Activated CD4-positive, alpha-beta T cell treated with anti-CD3 and anti-CD28 coated beads for 36 hours (primary cell): ENCODE measurements at regions of chr17 and their contacts with region 1.

Region 1: GRCh38 chr17:49788478-49789242 is at the start of gene KAT7:
- DNase-seq: peak; percentile 99
- ATAC-seq: peak; percentile 91
- H3K4me3 Mint-ChIP-seq: peak within 1 kb of the TSS; percentile 89
- H3K27ac Mint-ChIP-seq: peak within 1 kb of the TSS; percentile 98
- H3K4me1 Mint-ChIP-seq: peaks cover 53% of the 10 kb centered on the region
- H3K27me3 Mint-ChIP-seq: no peaks in the 10 kb centered on the region
- total RNA-seq, gene KAT7: 63.5 to 93.0 TPM

Region 2: DNA sequence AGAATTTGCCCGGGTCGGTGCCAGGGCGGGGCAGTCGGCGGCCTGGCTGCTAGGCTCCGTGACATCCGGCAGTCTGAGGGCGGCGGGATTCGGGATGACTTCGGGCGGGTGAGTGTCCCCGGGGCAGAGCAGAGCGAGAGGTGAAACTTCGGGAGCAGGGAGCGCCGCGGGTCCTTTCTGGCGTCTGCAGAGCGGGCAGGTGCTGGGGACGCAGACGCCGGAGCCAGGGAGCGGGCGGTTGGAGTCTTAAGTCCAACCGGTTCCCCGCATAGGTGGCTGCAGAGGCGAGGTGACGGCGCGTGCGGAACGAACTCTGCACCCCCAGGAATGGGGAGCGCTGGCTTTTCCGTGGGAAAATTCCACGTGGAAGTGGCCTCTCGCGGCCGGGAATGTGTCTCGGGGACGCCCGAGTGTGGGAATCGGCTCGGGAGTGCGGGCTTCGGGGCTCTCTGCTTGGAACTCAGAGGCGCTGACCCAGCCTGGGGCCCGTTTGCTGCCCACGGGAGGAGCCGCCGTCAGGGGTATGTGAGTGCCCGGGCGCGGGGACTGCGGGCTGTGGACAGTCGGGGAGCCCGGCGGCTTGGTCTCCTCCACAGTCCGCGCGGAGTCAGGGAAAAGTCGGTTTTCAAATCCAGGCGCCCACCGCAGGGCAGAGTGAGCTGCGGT is 655.8 kb before region 1 on chr17 and contains the start of gene B4GALNT2:
- CTCF ChIA-PET with region 1: no interaction called
- POLR2A ChIA-PET with region 1: no interaction called
- intact Hi-C with region 1: no loop called
- DNase-seq: peak; percentile 43
- ATAC-seq: peak; percentile 39
- H3K4me3 Mint-ChIP-seq: peak within 1 kb of the TSS; percentile 40
- H3K27ac Mint-ChIP-seq: no peak within 1 kb of the TSS
- H3K4me1 Mint-ChIP-seq: peaks cover 7% of the 10 kb centered on the region
- H3K27me3 Mint-ChIP-seq: peaks cover 39% of the 10 kb centered on the region
- total RNA-seq, gene B4GALNT2: 0.02 TPM in 1 of 2 experiments, not detected in the other

Region 3: GRCh38 chr17:49414622-49415350 is 373.9 kb before region 1 on chr17 and contains the start of gene PHB1:
- CTCF ChIA-PET with region 1: no interaction called
- POLR2A ChIA-PET with region 1: no interaction called
- intact Hi-C with region 1: loop called (anchors 1 to 2 kb)
- DNase-seq: peak; percentile 98
- ATAC-seq: peak; percentile 100
- H3K4me3 Mint-ChIP-seq: peak within 1 kb of the TSS; percentile 100
- H3K27ac Mint-ChIP-seq: peak within 1 kb of the TSS; percentile 95
- H3K4me1 Mint-ChIP-seq: peaks cover 32% of the 10 kb centered on the region
- H3K27me3 Mint-ChIP-seq: no peaks in the 10 kb centered on the region
- total RNA-seq, gene PHB1: 346 to 350 TPM

Region 4: GRCh38 chr17:49694847-49695683 is 93.6 kb before region 1 on chr17:
- CTCF ChIA-PET with region 1: interaction called, 8 read pairs
- POLR2A ChIA-PET with region 1: interaction called, 3 read pairs
- intact Hi-C with region 1: loop called (anchors 1 kb)
- DNase-seq: peak; percentile 85
- ATAC-seq: no peak
- H3K4me3 Mint-ChIP-seq: no peak overlapping the region
- H3K27ac Mint-ChIP-seq: peak overlapping the region; percentile 90
- H3K4me1 Mint-ChIP-seq: peaks cover 36% of the 10 kb centered on the region
- H3K27me3 Mint-ChIP-seq: no peaks in the 10 kb centered on the region

Region 5: GRCh38 chr17:49739641-49740271 is 48.9 kb before region 1 on chr17:
- CTCF ChIA-PET with region 1: interaction called, 3 read pairs
- POLR2A ChIA-PET with region 1: interaction called, 8 read pairs
- intact Hi-C with region 1: loop called (anchors 1 kb)
- DNase-seq: peak; percentile 90
- ATAC-seq: peak; percentile 88
- H3K4me3 Mint-ChIP-seq: peak overlapping the region; percentile 74
- H3K27ac Mint-ChIP-seq: peak overlapping the region; percentile 99
- H3K4me1 Mint-ChIP-seq: peaks cover 75% of the 10 kb centered on the region
- H3K27me3 Mint-ChIP-seq: no peaks in the 10 kb centered on the region

Region 6: GRCh38 chr17:49968380-49969133 is 179.9 kb after region 1 on chr17:
- CTCF ChIA-PET with region 1: no interaction called
- POLR2A ChIA-PET with region 1: no interaction called
- intact Hi-C with region 1: loop called in 1 of 2 experiments (anchors 1 kb)
- DNase-seq: peak; percentile 85
- ATAC-seq: peak; percentile 83
- H3K4me3 Mint-ChIP-seq: peak overlapping the region; percentile 82
- H3K27ac Mint-ChIP-seq: peak overlapping the region; percentile 61
- H3K4me1 Mint-ChIP-seq: peaks cover 34% of the 10 kb centered on the region
- H3K27me3 Mint-ChIP-seq: peaks cover 70% of the 10 kb centered on the region